ENCODE measurements at regions of chr14 and their contacts with region 1.

Region 1: DNA sequence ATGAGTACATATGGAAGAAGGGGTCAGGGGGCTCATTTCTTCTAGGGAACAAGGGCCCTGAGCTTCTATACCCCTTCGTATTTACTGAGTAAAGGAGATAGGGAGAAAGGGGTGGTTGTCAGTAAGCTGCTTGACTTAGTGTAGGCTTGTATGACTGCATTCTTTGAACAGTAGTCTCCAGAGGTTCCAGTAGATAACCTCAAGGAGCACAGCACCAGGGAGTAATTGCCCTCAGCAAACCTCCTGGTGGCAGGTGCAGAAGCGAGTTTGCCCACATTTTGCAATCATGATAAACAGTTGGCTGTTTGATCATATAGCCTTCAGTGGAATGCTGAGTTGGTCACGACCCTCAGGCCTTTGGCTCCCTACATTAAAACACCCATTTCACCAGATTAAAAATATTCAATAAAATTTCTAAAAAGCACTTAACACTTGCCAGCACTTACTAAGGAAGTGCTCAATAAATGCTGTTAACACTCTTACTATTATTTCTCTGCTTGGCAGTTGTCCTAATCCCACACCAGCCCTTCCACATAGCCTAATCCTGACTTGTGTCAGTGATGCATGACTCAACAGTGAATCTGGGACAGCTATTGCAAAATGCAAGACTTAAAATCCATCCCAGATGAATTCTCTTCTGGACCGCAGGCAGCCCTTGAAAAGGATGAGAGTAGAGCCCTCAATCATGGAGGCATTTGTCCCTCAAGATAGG is 3.7 kb upstream of the DHRS4L2 start:
- DNase-seq: no peak
- H3K4me3 ChIP-seq: no peak overlapping the region
- H3K27ac ChIP-seq: no peak overlapping the region
- H3K4me1 ChIP-seq: no peaks in the 10 kb centered on the region
- H3K27me3 ChIP-seq: no peaks in the 10 kb centered on the region
- CTCF ChIP-seq: no peak
- EP300 ChIP-seq: no peak
- POLR2A ChIP-seq: no peak

Region 2: GRCh38 chr14:24093901-24094761 is 109.1 kb after region 1 on chr14 and contains the start of gene PCK2:
- intact Hi-C with region 1: loop called in 1 of 4 experiments (anchors 10 kb)
- DNase-seq: peak; percentile 75 to 88 (median 81)
- H3K4me3 ChIP-seq: peak within 1 kb of the TSS; percentile 63
- H3K27ac ChIP-seq: peak within 1 kb of the TSS; percentile 40 to 46
- H3K4me1 ChIP-seq: peaks cover 3% of the 10 kb centered on the region
- H3K27me3 ChIP-seq: no peaks in the 10 kb centered on the region
- CTCF ChIP-seq: peak in 1 of 3 donors; percentile 52
- EP300 ChIP-seq: no peak
- POLR2A ChIP-seq: peak; percentile 48
- total RNA-seq, gene PCK2: 2.4 to 66.8 (median 5.4) TPM